ENCODE measurements at regions of chr5 and their contacts with region 1.

Region 1: DNA sequence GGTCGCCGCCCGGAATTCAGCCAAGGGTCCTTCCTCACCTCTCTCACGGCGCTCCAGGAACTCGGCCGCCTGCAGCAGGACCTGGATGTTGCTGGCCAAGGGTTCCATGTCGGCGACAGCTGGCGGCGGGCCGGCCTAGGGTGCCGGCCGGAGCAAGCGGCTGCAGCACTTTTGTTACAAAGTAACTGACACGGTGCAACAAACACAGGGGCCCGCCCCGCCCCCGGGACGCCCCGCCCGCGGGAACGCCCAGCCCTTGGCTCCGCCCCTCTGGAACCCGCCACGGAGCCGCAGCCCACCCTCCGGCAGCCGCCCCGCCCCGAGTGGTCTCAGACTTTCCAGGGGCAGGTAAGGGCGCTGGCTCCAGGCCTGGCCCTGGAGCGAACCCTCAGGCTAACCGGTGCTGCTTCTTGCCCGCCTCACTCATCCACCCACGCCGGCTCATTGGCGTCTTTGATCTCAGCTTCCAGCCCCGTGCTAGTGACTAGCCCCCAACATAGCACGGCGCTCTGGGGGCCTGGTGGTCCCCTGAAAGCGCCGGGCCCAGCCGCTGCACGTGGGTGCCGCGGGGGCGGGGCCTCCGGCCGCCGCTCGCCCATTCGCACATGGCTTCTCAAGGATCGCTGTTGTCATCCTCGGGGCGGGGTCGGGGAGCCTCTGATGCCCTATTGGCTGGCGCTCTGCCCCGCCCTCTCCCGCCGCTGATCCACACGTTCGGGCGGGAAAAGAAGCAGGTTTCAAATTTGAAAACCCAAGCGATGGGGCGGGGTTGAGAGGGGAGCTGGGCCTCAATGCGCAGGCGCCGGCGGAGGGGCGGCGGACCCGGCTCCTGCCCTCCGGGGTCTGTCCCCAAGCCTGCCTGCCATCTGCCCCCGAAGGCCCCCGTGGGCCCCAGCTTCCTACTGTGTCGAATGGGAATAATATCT is at the start of gene MXD3:
- DNase-seq: peak; percentile 99
- H3K4me3 Mint-ChIP-seq: peak within 1 kb of the TSS; percentile 66
- H3K27ac Mint-ChIP-seq: peak within 1 kb of the TSS; percentile 51
- H3K4me1 Mint-ChIP-seq: peaks cover 29% of the 10 kb centered on the region
- H3K27me3 Mint-ChIP-seq: no peaks in the 10 kb centered on the region
- CTCF ChIP-seq: no peak
- total RNA-seq, gene MXD3: 8.4 and 13.2 TPM in 2 replicates

Region 2: DNA sequence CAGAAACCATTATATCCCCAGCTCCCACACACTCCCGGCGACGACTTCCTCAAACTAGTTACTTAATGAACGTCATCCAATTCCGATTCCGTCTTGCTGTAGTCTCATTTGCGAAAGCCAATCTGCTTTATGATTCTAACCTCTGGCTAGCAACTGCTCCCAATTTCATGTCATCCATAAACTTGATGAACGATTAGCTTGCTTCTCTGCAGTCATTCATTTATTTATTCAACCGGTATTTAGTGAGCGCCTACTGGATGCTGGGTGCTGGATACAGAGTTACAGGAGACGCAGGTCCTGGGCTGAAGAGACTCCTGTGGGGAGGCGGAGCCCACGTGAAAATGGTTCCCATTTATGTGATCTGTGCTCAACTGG is 618.5 kb before region 1 on chr5:
- CTCF ChIA-PET with region 1: no interaction called
- POLR2A ChIA-PET with region 1: no interaction called
- intact Hi-C with region 1: no loop called
- DNase-seq: peak; percentile 34
- H3K4me3 Mint-ChIP-seq: no peak overlapping the region
- H3K27ac Mint-ChIP-seq: no peak overlapping the region
- H3K4me1 Mint-ChIP-seq: peaks cover 8% of the 10 kb centered on the region
- H3K27me3 Mint-ChIP-seq: peaks cover 91% of the 10 kb centered on the region
- CTCF ChIP-seq: no peak

Region 3: GRCh38 chr5:177146891-177147638 is 164.9 kb before region 1 on chr5:
- CTCF ChIA-PET with region 1: no interaction called
- POLR2A ChIA-PET with region 1: no interaction called
- intact Hi-C with region 1: no loop called
- DNase-seq: no peak
- H3K4me3 Mint-ChIP-seq: no peak overlapping the region
- H3K27ac Mint-ChIP-seq: no peak overlapping the region
- H3K4me1 Mint-ChIP-seq: peaks cover 8% of the 10 kb centered on the region
- H3K27me3 Mint-ChIP-seq: no peaks in the 10 kb centered on the region
- CTCF ChIP-seq: no peak

Region 4: GRCh38 chr5:177290816-177291596 is 21.0 kb before region 1 on chr5:
- CTCF ChIA-PET with region 1: interaction called, 12 read pairs
- POLR2A ChIA-PET with region 1: no interaction called
- intact Hi-C with region 1: no loop called
- DNase-seq: no peak
- H3K4me3 Mint-ChIP-seq: no peak overlapping the region
- H3K27ac Mint-ChIP-seq: no peak overlapping the region
- H3K4me1 Mint-ChIP-seq: peaks cover 6% of the 10 kb centered on the region
- H3K27me3 Mint-ChIP-seq: no peaks in the 10 kb centered on the region
- CTCF ChIP-seq: no peak

Region 5: GRCh38 chr5:177327539-177328522 is 15.8 kb after region 1 on chr5:
- CTCF ChIA-PET with region 1: interaction called, 59 read pairs
- POLR2A ChIA-PET with region 1: interaction called, 4 read pairs
- intact Hi-C with region 1: no loop called
- DNase-seq: peak; percentile 34
- H3K4me3 Mint-ChIP-seq: no peak overlapping the region
- H3K27ac Mint-ChIP-seq: peak overlapping the region; percentile 68
- H3K4me1 Mint-ChIP-seq: peaks cover 20% of the 10 kb centered on the region
- H3K27me3 Mint-ChIP-seq: no peaks in the 10 kb centered on the region
- CTCF ChIP-seq: no peak

Region 6: GRCh38 chr5:177370488-177371119 is 58.6 kb after region 1 on chr5:
- CTCF ChIA-PET with region 1: interaction called, 24 read pairs
- POLR2A ChIA-PET with region 1: no interaction called
- intact Hi-C with region 1: no loop called
- DNase-seq: peak; percentile 96
- H3K4me3 Mint-ChIP-seq: peak overlapping the region; percentile 76
- H3K27ac Mint-ChIP-seq: no peak overlapping the region
- H3K4me1 Mint-ChIP-seq: peaks cover 24% of the 10 kb centered on the region
- H3K27me3 Mint-ChIP-seq: no peaks in the 10 kb centered on the region
- CTCF ChIP-seq: peak; percentile 60